Heart left ventricle (tissue), 16 donors: ENCODE measurements at regions of chr22 and their contacts with region 1.

Region 1: DNA sequence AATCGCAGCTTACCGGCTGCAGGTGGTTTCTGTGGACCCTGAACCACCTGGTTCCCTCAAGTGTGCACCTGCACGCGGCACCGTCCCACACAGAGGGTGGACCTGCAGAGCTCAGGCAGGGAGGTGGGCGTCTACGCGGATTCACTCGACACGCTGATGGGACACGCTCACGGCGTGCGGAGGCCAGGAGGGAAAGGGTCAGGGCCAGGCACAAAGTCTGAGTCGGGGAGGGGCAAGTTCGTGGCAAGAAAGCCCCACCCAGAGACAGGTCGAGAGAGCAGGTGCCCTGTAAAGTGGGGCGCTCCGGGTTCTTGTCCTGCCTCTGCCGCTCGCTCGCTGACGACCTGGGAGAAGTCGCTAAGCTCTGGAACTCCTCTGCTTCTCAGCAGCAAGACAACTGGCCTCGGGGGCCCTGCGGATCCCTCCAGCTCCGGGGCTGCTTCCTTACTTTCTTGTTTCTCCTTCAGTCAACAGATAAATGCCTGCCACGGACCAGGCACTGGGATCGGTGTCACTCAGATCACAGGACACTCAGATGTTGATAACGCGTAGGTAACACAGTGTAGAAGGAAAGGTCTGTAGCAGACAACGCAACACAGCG is 72.4 kb upstream of the NUP50 start:
- DNase-seq: no peak
- ATAC-seq: no peak
- H3K4me3 ChIP-seq: no peak overlapping the region
- H3K27ac ChIP-seq: no peak overlapping the region
- H3K4me1 ChIP-seq: no peaks in the 10 kb centered on the region
- H3K27me3 ChIP-seq: peaks cover 0 to 79% (median 15%) of the 10 kb centered on the region in 9 donors
- CTCF ChIP-seq: no peak
- POLR2A ChIP-seq: no peak

Region 2: DNA sequence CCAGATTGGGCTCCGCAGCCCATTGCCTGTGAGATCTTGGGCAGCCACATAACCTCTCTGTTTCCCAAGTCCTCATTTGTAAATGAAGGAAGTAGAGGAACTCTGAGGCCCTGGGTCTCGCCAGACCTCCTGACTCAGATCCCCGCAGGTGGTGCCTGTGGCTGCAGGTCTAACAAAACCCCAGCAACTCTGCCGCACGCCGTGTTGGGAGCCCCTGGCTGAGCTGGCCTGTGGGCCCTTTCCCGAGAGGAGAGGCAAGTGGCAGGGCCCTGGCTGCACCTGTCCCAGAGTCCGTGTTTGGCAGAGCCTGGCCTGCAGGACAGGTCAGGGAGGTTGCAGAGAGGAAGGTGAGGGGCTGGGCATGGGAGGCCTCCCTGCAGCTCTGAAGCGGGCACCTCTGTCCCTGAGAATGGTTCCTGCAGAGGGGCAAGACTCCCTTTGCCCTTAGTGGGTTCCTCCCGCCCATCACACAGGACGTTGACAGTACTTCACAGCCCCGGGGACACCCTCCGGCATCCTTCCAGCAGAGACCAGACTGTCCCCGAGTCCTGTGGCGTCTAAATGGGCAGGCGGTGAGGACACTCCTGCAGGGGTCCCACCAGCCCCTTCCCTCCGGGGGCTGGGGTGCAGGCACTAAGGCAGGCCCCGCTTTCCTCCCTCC is 271.3 kb before region 1 on chr22:
- intact Hi-C with region 1: loop called in 9 of 10 experiments (anchors 1 to 5 kb)
- DNase-seq: peak in 1 of 5 donors; percentile 13
- ATAC-seq: no peak
- H3K4me3 ChIP-seq: no peak overlapping the region
- H3K27ac ChIP-seq: no peak overlapping the region
- H3K4me1 ChIP-seq: no peaks in the 10 kb centered on the region
- H3K27me3 ChIP-seq: peaks cover 0 to 16% (median 0%) of the 10 kb centered on the region in 9 donors
- CTCF ChIP-seq: no peak
- POLR2A ChIP-seq: no peak

Region 3: GRCh38 chr22:44918166-44918924 is 173.0 kb before region 1 on chr22:
- intact Hi-C with region 1: no loop called
- DNase-seq: peak in 1 of 5 donors; percentile 53
- ATAC-seq: peak in 1 of 4 donors; percentile 14
- H3K4me3 ChIP-seq: no peak overlapping the region
- H3K27ac ChIP-seq: no peak overlapping the region
- H3K4me1 ChIP-seq: no peaks in the 10 kb centered on the region
- H3K27me3 ChIP-seq: no peaks in the 10 kb centered on the region
- CTCF ChIP-seq: no peak
- POLR2A ChIP-seq: no peak

Region 4: GRCh38 chr22:44975427-44976262 is 115.7 kb before region 1 on chr22:
- intact Hi-C with region 1: loop called in 7 of 10 experiments (anchors 5 to 10 kb)
- DNase-seq: peak; percentile 75 to 87 (median 78)
- ATAC-seq: peak; percentile 66 to 91 (median 90)
- H3K4me3 ChIP-seq: no peak overlapping the region
- H3K27ac ChIP-seq: no peak overlapping the region
- H3K4me1 ChIP-seq: no peaks in the 10 kb centered on the region
- H3K27me3 ChIP-seq: peaks cover 0 to 8% (median 0%) of the 10 kb centered on the region in 9 donors
- CTCF ChIP-seq: peak; percentile 25 to 75 (median 56)
- POLR2A ChIP-seq: no peak

Region 5: GRCh38 chr22:45058622-45058912 is 32.8 kb before region 1 on chr22:
- intact Hi-C with region 1: no loop called
- DNase-seq: no peak
- ATAC-seq: no peak
- H3K4me3 ChIP-seq: no peak overlapping the region
- H3K27ac ChIP-seq: no peak overlapping the region
- H3K4me1 ChIP-seq: no peaks in the 10 kb centered on the region
- H3K27me3 ChIP-seq: peaks cover 0 to 10% (median 0%) of the 10 kb centered on the region in 9 donors
- CTCF ChIP-seq: no peak
- POLR2A ChIP-seq: no peak